Caco-2 (cell line): ENCODE measurements at regions of chr2 and their contacts with region 1.

Region 1: DNA sequence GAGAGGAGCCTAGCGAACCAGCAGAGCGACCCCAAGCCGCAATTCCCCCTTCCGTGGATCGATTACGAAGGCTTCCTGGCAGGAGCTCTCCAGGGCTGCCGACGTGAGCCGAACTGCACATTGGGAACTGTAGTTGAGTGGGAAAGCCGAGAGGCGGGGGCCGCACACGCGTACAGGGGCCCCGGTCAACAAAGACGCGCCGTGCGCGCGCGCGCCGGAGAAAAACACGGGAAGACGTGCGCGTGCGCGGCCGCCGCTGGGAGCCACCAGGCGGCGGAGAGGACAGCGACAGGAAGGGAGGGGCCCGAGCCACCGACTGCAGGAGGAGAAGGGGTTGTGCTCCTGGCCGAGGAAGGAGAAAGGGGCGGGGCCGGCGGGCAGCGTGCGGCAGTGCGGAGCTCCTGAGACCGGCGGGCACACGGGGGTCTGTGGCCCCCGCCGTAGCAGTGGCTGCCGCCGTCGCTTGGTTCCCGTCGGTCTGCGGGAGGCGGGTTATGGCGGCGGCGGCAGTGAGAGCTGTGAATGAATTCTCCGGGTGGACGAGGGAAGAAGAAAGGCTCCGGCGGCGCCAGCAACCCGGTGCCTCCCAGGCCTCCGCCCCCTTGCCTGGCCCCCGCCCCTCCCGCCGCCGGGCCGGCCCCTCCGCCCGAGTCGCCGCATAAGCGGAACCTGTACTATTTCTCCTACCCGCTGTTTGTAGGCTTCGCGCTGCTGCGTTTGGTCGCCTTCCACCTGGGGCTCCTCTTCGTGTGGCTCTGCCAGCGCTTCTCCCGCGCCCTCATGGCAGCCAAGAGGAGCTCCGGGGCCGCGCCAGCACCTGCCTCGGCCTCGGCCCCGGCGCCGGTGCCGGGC is at the start of gene SPAST:
- DNase-seq: peak; percentile 98 to 99
- H3K4me3 ChIP-seq: peak within 1 kb of the TSS; percentile 94
- H3K4me3 Mint-ChIP-seq: peak within 1 kb of the TSS; percentile 71
- H3K27ac Mint-ChIP-seq: peak within 1 kb of the TSS; percentile 78
- H3K4me1 ChIP-seq: no peaks in the 10 kb centered on the region; the same call in 1 of the 2 replicates
- H3K4me1 Mint-ChIP-seq: peaks cover 7% of the 10 kb centered on the region
- H3K27me3 ChIP-seq: no peaks in the 10 kb centered on the region
- H3K27me3 Mint-ChIP-seq: no peaks in the 10 kb centered on the region
- CTCF ChIP-seq: peak; percentile 51 to 58
- total RNA-seq, gene SPAST: 29.7 and 31.7 TPM in 2 replicates

Region 2: GRCh38 chr2:31580321-31581117 is 483.0 kb before region 1 on chr2 and contains the start of gene SRD5A2:
- CTCF ChIA-PET with region 1: no interaction called
- POLR2A ChIA-PET with region 1: no interaction called
- intact Hi-C with region 1: no loop called
- DNase-seq: no peak
- H3K4me3 ChIP-seq: no peak within 1 kb of the TSS
- H3K4me3 Mint-ChIP-seq: no peak within 1 kb of the TSS
- H3K27ac Mint-ChIP-seq: no peak within 1 kb of the TSS
- H3K4me1 ChIP-seq: no peaks in the 10 kb centered on the region
- H3K4me1 Mint-ChIP-seq: no peaks in the 10 kb centered on the region
- H3K27me3 ChIP-seq: no peaks in the 10 kb centered on the region
- H3K27me3 Mint-ChIP-seq: peaks cover 11% of the 10 kb centered on the region
- CTCF ChIP-seq: no peak
- total RNA-seq, gene SRD5A2: not detected in 2 replicates

Region 3: DNA sequence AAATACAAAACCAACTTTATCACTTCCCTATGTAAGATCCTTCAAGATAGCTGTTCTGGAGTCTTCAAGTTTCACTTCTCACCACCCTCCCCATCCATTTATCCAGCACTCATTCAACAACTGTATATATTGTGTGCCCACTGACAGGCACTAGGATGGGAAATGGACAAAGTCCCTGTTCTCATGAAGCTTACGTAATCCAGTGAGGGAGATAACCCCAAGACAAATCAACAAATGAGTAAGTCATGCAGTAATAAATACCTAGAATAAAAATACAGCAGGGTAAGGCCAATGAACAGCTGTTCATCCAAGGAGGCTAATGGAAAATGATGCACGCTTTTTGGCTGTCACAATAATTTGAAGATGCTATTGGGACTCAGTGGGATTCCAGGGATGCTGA is 186.5 kb before region 1 on chr2:
- CTCF ChIA-PET with region 1: no interaction called
- POLR2A ChIA-PET with region 1: no interaction called
- intact Hi-C with region 1: no loop called
- DNase-seq: peak; percentile 37 to 48
- H3K4me3 ChIP-seq: no peak overlapping the region
- H3K4me3 Mint-ChIP-seq: no peak overlapping the region
- H3K27ac Mint-ChIP-seq: no peak overlapping the region
- H3K4me1 ChIP-seq: peaks cover 14% of the 10 kb centered on the region
- H3K4me1 Mint-ChIP-seq: peaks cover 7% of the 10 kb centered on the region
- H3K27me3 ChIP-seq: no peaks in the 10 kb centered on the region
- H3K27me3 Mint-ChIP-seq: no peaks in the 10 kb centered on the region
- CTCF ChIP-seq: no peak

Region 4: GRCh38 chr2:32010670-32011484 is 52.7 kb before region 1 on chr2 and contains the start of gene MEMO1:
- CTCF ChIA-PET with region 1: interaction called, 3 read pairs
- POLR2A ChIA-PET with region 1: interaction called, 5 read pairs
- intact Hi-C with region 1: loop called (anchors 1 kb)
- DNase-seq: peak; percentile 95 to 96
- H3K4me3 ChIP-seq: peak within 1 kb of the TSS; percentile 95
- H3K4me3 Mint-ChIP-seq: peak within 1 kb of the TSS; percentile 91
- H3K27ac Mint-ChIP-seq: peak within 1 kb of the TSS; percentile 86
- H3K4me1 ChIP-seq: peaks cover 31% of the 10 kb centered on the region
- H3K4me1 Mint-ChIP-seq: peaks cover 23% of the 10 kb centered on the region
- H3K27me3 ChIP-seq: no peaks in the 10 kb centered on the region
- H3K27me3 Mint-ChIP-seq: no peaks in the 10 kb centered on the region
- CTCF ChIP-seq: no peak
- total RNA-seq, gene MEMO1: 75.9 and 79.0 TPM in 2 replicates

Region 5: GRCh38 chr2:32074134-32074506 is 10.6 kb after region 1 on chr2:
- CTCF ChIA-PET with region 1: interaction called, 13 read pairs
- POLR2A ChIA-PET with region 1: interaction called, 41 read pairs
- intact Hi-C with region 1: loop called (anchors 1 kb)
- DNase-seq: no peak
- H3K4me3 ChIP-seq: no peak overlapping the region
- H3K4me3 Mint-ChIP-seq: peak overlapping the region; percentile 48
- H3K27ac Mint-ChIP-seq: peak overlapping the region; percentile 96
- H3K4me1 ChIP-seq: peaks cover 35% of the 10 kb centered on the region
- H3K4me1 Mint-ChIP-seq: peaks cover 27% of the 10 kb centered on the region
- H3K27me3 ChIP-seq: no peaks in the 10 kb centered on the region
- H3K27me3 Mint-ChIP-seq: no peaks in the 10 kb centered on the region
- CTCF ChIP-seq: no peak

Region 6: DNA sequence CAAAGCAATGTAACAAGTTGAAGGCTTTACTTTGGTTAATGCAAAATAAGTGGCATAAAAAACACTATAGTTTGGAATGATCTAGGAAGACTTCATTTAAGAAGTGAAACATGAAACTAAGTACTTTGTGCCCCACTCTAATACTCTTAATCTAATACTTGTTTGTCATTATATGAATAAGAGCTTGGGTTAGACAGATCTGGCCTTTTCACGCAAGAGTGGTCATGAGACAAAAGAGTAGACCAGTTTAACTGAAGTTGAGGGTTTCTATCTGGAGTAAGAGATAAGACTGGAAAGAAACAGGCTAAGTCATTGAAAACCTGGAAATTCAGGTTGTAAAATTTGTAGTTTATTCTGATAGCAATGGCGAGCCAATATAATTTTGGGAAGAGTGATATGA is 105.0 kb after region 1 on chr2:
- CTCF ChIA-PET with region 1: interaction called, 4 read pairs
- POLR2A ChIA-PET with region 1: interaction called, 20 read pairs
- intact Hi-C with region 1: loop called (anchors 2 kb)
- DNase-seq: no peak
- H3K4me3 ChIP-seq: no peak overlapping the region
- H3K4me3 Mint-ChIP-seq: no peak overlapping the region
- H3K27ac Mint-ChIP-seq: no peak overlapping the region
- H3K4me1 ChIP-seq: peaks cover 10% of the 10 kb centered on the region; the same call in 1 of the 2 replicates
- H3K4me1 Mint-ChIP-seq: peaks cover 19% of the 10 kb centered on the region
- H3K27me3 ChIP-seq: no peaks in the 10 kb centered on the region
- H3K27me3 Mint-ChIP-seq: no peaks in the 10 kb centered on the region
- CTCF ChIP-seq: no peak